Caco-2 (cell line): ENCODE measurements at regions of chr2 and their contacts with region 1.

Region 1: GRCh38 chr2:132416081-132416881 is at the start of gene GPR39:
- DNase-seq: peak; percentile 99
- H3K4me3 ChIP-seq: peak within 1 kb of the TSS; percentile 59
- H3K4me3 Mint-ChIP-seq: peak within 1 kb of the TSS; percentile 84
- H3K27ac Mint-ChIP-seq: peak within 1 kb of the TSS; percentile 97
- H3K4me1 ChIP-seq: peaks cover 51% of the 10 kb centered on the region
- H3K4me1 Mint-ChIP-seq: peaks cover 49% of the 10 kb centered on the region
- H3K27me3 ChIP-seq: no peaks in the 10 kb centered on the region
- H3K27me3 Mint-ChIP-seq: no peaks in the 10 kb centered on the region
- CTCF ChIP-seq: no peak
- total RNA-seq, gene GPR39: 26.8 and 28.7 TPM in 2 replicates

Region 2: GRCh38 chr2:131492418-131493198 is 923.7 kb before region 1 on chr2:
- CTCF ChIA-PET with region 1: no interaction called
- POLR2A ChIA-PET with region 1: no interaction called
- intact Hi-C with region 1: loop called (anchors 10 kb)
- DNase-seq: peak; percentile 97 to 98
- H3K4me3 ChIP-seq: peak overlapping the region; percentile 96
- H3K4me3 Mint-ChIP-seq: peak overlapping the region; percentile 95
- H3K27ac Mint-ChIP-seq: peak overlapping the region; percentile 98
- H3K4me1 ChIP-seq: no peaks in the 10 kb centered on the region
- H3K4me1 Mint-ChIP-seq: no peaks in the 10 kb centered on the region
- H3K27me3 ChIP-seq: no peaks in the 10 kb centered on the region
- H3K27me3 Mint-ChIP-seq: no peaks in the 10 kb centered on the region
- CTCF ChIP-seq: peak; percentile 90 to 91

Region 3: DNA sequence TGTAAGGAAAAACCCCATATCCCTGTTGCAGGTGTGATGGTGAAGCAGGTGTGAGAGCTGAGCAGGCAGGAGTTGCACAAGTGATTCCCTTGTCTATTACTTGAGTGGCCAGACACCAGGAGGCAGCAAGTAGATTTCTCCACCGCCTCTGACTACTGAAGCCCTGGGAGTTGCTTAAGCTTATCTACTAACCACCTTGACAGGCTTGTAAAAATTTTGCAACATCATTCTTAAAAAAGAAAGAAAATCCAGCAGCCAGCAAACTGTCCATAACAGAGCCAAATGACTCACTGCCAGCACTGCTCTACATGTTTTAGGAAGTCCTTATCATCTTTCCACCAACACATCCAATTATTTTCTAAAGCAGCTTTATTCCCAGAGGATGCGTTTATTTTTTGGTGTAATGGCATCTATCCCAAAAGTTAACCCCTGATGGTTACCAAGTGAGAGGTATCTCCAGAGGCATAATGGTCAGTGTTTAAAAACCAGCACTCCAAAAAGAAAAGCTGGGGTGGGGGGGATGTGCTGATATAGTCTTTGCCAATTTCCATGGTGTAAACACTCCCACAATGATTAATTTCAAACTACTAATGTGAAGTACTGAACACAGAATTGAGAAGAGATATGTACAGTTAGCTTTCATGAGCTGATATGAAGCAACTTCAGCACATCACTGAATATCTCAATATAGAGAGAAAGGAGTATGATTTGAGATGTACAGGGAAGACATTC is 15.9 kb before region 1 on chr2:
- CTCF ChIA-PET with region 1: interaction called, 18 read pairs
- POLR2A ChIA-PET with region 1: interaction called, 6 read pairs
- intact Hi-C with region 1: loop called (anchors 1 kb)
- DNase-seq: peak; percentile 76 to 79
- H3K4me3 ChIP-seq: no peak overlapping the region
- H3K4me3 Mint-ChIP-seq: no peak overlapping the region
- H3K27ac Mint-ChIP-seq: no peak overlapping the region
- H3K4me1 ChIP-seq: no peaks in the 10 kb centered on the region
- H3K4me1 Mint-ChIP-seq: peaks cover 22% of the 10 kb centered on the region
- H3K27me3 ChIP-seq: no peaks in the 10 kb centered on the region
- H3K27me3 Mint-ChIP-seq: no peaks in the 10 kb centered on the region
- CTCF ChIP-seq: peak in 1 of 2 experiments; percentile 37